AG04449 (cell line): ENCODE measurements at regions of chr1 and their contacts with region 1.

Region 1: GRCh38 chr1:184982002-184982954 is 8.0 kb upstream of the NIBAN1 start:
- DNase-seq: no peak
- H3K4me3 ChIP-seq: no peak overlapping the region
- CTCF ChIP-seq: peak; percentile 89

Region 2: GRCh38 chr1:184792450-184792969 is 189.8 kb before region 1 on chr1:
- CTCF ChIA-PET with region 1: interaction called, 24 read pairs
- POLR2A ChIA-PET with region 1: no interaction called
- DNase-seq: peak; percentile 96
- H3K4me3 ChIP-seq: no peak overlapping the region
- CTCF ChIP-seq: no peak

Region 3: GRCh38 chr1:184805667-184806295 is 176.5 kb before region 1 on chr1:
- CTCF ChIA-PET with region 1: interaction called, 650 read pairs
- POLR2A ChIA-PET with region 1: no interaction called
- DNase-seq: peak; percentile 36
- H3K4me3 ChIP-seq: no peak overlapping the region
- CTCF ChIP-seq: peak; percentile 93

Region 4: GRCh38 chr1:184827600-184828368 is 154.5 kb before region 1 on chr1:
- CTCF ChIA-PET with region 1: interaction called, 19 read pairs
- POLR2A ChIA-PET with region 1: no interaction called
- DNase-seq: no peak
- H3K4me3 ChIP-seq: no peak overlapping the region
- CTCF ChIP-seq: no peak

Region 5: DNA sequence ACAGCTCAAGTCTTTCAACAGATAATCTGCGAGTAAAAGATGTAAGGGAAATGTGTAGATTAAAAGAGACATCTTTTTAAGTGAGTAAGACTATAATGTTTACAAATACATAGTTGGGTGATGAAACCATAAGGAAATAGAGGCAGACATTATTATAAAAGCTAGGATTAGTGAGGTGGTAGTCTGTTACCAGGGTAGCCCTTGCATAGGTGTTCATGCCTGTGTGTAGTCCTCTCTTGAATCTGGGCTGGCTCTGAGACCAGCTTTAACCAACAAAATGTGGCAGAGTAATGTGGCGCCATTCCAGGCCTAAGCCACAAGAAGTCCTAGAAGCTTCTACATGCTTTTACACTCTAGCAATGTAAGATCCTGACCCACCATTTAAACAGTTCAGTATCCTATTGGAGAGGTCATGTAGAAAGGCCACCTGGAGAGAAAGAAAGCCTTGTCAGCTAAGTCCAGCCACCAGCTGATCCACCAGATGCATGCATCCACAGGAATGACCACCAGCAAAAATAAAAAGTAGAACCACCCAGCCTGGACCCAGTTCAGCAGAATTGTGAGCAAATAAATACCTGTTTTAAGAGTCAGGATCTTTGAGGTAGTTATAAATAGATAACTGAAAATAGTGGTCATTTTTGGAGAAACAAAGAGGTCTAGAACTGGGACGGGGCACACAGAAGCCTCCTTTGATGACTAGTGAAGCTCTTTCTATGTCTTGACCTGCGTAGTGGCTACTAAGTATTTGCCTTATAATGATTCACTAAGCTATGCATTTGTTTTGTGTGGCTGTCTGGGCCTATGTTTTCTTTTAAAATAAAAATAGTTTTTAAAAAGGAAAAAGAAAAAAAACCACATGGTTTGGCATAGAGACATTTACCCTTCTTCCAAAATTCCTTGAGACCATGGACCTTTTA is 16.1 kb before region 1 on chr1:
- CTCF ChIA-PET with region 1: interaction called, 41 read pairs
- POLR2A ChIA-PET with region 1: no interaction called
- DNase-seq: no peak
- H3K4me3 ChIP-seq: no peak overlapping the region
- CTCF ChIP-seq: no peak

Region 6: GRCh38 chr1:185008838-185009237 is 26.6 kb after region 1 on chr1:
- CTCF ChIA-PET with region 1: no interaction called
- POLR2A ChIA-PET with region 1: no interaction called
- DNase-seq: no peak
- H3K4me3 ChIP-seq: no peak overlapping the region
- CTCF ChIP-seq: no peak

Region 7: DNA sequence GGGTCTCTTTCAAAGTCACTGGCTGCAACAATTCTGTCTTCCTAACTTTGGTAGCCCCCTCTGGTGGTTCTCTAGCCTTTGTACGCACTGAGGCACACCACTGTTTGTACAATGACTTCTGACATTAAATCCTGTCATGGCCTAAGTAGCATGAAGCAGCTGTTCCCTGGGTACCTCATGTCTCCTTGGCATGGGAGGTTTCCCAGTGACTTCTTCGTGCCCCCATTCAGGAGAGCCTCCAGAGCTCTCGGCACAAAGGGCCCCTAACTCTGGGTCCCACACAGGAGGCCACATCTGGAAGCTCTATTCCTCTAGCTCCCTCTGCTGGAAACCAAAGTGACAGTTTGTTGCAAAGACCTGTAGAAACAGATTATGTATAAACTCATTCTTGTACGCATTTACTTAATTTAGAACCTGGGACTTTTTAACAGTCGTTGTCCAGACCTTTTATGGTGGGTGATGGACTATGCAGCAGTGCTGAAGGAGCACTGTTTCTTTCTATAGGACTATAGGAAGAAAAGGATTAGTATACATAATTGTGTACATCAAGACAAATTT is 188.1 kb after region 1 on chr1:
- CTCF ChIA-PET with region 1: interaction called, 173 read pairs
- POLR2A ChIA-PET with region 1: no interaction called
- DNase-seq: no peak
- H3K4me3 ChIP-seq: no peak overlapping the region
- CTCF ChIP-seq: peak; percentile 63

Region 8: DNA sequence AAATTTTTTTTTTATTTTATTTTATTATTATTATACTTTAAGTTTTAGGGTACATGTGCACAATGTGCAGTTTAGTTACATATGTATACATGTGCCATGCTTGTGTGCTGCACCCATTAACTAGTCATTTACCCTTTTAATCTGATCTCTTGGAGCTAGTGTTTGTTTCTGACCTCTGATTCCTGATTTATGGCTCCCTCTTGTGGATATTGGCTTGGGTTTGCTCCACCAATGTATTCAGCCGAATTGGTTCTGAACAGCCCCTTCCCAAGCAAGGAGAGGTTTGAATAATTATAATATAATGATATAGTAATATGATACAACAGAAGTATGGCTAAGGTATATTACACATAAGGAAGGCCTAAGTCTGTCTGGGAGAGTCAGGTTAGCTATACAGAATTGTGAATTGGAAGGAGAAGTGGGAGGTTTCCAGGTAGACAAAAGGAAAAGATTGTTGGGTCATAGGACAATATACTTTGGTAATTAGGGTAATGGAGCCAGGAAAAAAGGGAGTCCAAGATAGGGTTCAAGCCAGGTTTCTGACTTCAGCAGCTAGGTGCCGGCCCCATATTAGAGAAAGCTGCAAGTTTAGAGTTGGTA is 698.9 kb after region 1 on chr1:
- CTCF ChIA-PET with region 1: interaction called, 10 read pairs
- POLR2A ChIA-PET with region 1: no interaction called
- DNase-seq: no peak
- H3K4me3 ChIP-seq: no peak overlapping the region
- CTCF ChIP-seq: peak; percentile 49